Activated T-helper 2 cell treated with anti-CD3 and anti-CD28 coated beads, Interferon-gamma antibody, Interleukin-2, Interleukin-4, amounts not matched to agents 10 μg/mL and 5 μg/mL and 100 μg/mL, durations not matched to agents 14 hours and 24 hours and 36 hours (primary cell): ENCODE measurements at regions of chr1 and their contacts with region 1.

Region 1: DNA sequence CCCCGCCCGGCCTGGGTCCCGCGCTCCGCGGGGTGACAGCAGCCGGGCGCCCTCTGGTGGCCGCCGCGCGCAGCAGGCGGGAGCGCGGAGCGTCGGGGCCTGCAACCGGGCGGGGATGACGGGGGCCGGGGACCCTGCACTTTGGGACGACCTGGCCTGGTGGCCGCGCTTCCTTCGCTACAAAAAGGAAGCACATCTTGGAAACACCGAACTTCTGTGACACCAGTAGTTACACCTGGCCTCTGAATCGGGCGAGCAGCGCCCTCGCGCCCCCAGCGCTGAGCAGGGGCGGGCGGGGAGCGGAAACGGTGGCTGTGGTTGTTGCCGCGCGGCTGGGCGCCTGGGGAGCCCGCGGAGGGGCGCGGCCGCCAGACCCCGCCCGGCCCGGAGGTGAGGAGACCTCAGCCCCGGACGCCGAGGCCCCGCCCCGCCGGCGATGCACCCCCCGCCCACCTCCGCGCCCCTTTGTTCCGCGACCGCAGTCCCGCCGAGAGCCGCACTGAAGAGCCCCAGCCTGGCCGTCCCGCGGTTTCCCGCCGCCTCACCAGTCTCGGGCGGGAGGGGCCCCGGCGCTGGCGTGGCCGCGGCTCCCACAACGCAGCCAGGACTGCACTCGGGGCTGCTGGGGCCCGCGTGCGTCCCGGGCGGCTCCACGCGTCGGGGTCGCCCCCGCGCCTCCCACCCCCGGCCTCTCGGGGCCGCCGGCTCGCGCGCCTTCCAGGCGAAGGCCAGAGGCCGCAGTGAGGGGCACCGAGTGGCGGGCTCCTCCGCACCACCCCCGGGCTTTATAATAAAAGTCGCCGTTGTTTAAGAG is 59.3 kb downstream of the H3-3A start:
- DNase-seq: peak; percentile 77
- H3K4me3 Mint-ChIP-seq: peak overlapping the region; percentile 81
- H3K27ac Mint-ChIP-seq: no peak overlapping the region
- H3K4me1 Mint-ChIP-seq: peaks cover 27% of the 10 kb centered on the region
- H3K27me3 Mint-ChIP-seq: peaks cover 13% of the 10 kb centered on the region

Region 2: GRCh38 chr1:225999227-225999911 is 122.4 kb before region 1 on chr1 and contains the start of gene SDE2:
- intact Hi-C with region 1: loop called (anchors 5 kb)
- DNase-seq: peak; percentile 100
- H3K4me3 Mint-ChIP-seq: peak within 1 kb of the TSS; percentile 100
- H3K27ac Mint-ChIP-seq: peak within 1 kb of the TSS; percentile 99
- H3K4me1 Mint-ChIP-seq: peaks cover 55% of the 10 kb centered on the region
- H3K27me3 Mint-ChIP-seq: no peaks in the 10 kb centered on the region
- total RNA-seq, gene SDE2: 22.0 and 22.3 TPM in 2 replicates

Region 3: DNA sequence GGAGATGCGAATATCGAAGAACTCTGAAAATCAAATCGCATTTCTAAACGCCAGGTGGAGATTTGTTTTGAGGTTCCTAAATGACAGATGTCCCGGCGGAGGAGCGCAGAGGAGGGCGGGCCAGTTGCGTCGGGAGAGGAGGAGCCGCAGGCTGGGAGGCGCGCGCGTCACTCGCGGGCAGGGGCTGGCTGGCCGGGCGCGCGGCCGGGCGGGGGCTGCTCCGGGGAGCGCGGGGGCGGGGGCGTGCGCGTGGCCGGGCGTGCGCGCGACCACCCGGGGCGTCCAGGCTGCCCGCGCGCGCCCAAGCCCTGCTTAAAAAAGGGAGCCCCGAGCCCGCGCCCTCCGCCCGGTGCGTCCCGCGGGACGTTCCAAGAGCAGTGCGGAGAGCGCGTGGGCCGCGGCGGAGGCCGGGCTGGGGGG is 12.0 kb before region 1 on chr1:
- intact Hi-C with region 1: loop called (anchors 1 kb)
- DNase-seq: peak; percentile 77
- H3K4me3 Mint-ChIP-seq: peak overlapping the region; percentile 83
- H3K27ac Mint-ChIP-seq: peak overlapping the region; percentile 79
- H3K4me1 Mint-ChIP-seq: peaks cover 15% of the 10 kb centered on the region
- H3K27me3 Mint-ChIP-seq: peaks cover 6% of the 10 kb centered on the region

Region 4: GRCh38 chr1:226201029-226201593 is 79.3 kb after region 1 on chr1:
- intact Hi-C with region 1: loop called (anchors 1 kb)
- DNase-seq: no peak
- H3K4me3 Mint-ChIP-seq: no peak overlapping the region
- H3K27ac Mint-ChIP-seq: no peak overlapping the region
- H3K4me1 Mint-ChIP-seq: no peaks in the 10 kb centered on the region
- H3K27me3 Mint-ChIP-seq: peaks cover 14% of the 10 kb centered on the region

Region 5: DNA sequence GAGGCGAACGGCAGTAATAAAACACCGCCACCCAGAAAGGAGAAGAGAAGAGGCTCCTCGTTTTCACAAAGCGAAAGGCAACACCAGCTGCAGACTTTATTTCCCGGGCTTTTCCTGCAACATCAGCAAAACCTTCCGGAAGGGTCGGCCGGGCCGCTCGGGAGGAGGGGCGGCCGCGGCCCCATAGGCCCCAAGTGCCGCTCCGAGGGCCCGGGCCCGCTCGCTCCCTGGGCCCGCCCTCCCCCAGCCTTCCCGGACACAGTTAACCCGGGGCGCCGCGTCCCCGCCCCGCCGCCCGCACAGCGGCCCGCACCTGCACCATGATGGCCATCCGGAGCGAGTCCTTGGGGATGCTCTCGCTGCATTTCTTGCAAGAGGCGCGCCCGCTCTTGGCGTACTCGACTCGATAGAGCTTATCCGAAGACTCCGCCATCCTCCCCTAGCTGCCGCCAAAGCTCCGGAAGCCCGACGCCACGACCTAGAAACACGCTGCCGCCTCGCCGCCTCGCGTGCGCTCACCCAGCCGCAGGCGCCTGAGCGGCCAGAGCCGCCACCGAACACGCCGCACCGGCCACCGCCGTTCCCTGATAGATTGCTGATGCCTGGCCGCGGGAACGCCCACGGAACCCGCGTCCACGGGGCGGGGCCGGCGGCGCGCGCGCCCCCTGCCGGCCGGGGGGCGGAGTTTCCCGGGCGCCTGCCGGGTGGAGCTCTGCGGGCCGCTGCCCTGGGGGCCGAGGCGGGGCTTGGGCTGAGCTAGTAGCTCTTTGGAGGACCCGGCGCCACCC is 285.9 kb after region 1 on chr1 and contains the start of gene PARP1:
- intact Hi-C with region 1: loop called (anchors 10 kb)
- DNase-seq: peak; percentile 90
- H3K4me3 Mint-ChIP-seq: peak within 1 kb of the TSS; percentile 93
- H3K27ac Mint-ChIP-seq: peak within 1 kb of the TSS; percentile 94
- H3K4me1 Mint-ChIP-seq: peaks cover 33% of the 10 kb centered on the region
- H3K27me3 Mint-ChIP-seq: no peaks in the 10 kb centered on the region
- total RNA-seq, gene PARP1: 194 and 197 TPM in 2 replicates